ENCODE measurements at regions of chr5 and their contacts with region 1.

Region 1: DNA sequence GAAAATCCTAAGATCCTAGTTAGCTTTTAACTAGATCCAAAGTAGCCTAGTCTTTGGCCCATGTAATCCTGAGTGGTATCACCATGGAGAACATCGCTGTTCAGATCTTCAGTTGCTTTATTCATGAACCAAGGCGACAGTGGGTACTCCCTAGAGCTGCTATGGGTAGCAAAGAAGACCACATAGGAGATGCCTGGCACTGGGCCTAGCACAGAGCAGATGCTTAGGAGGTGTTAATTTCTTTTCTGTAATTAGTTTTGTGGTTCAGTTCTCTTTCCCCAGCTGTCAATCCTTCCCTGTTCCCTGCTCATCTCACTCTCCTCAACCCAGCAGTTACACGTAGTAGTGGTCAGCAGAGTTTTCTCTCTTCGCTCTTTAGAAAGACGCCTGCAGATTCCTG is 9.3 kb downstream of the CAST start:
- DNase-seq: no peak
- H3K4me3 ChIP-seq: no peak overlapping the region
- H3K27ac ChIP-seq: no peak overlapping the region
- H3K4me1 ChIP-seq: no peaks in the 10 kb centered on the region
- H3K27me3 ChIP-seq: no peaks in the 10 kb centered on the region
- CTCF ChIP-seq: no peak
- EP300 ChIP-seq: no peak
- POLR2A ChIP-seq: no peak
- RAD21 ChIP-seq: no peak

Region 2: GRCh38 chr5:96687812-96688453 is 16.5 kb after region 1 on chr5:
- CTCF ChIA-PET with region 1: interaction called, 18 read pairs
- POLR2A ChIA-PET with region 1: no interaction called
- DNase-seq: no peak
- H3K4me3 ChIP-seq: no peak overlapping the region
- H3K27ac ChIP-seq: no peak overlapping the region
- H3K4me1 ChIP-seq: no peaks in the 10 kb centered on the region
- H3K27me3 ChIP-seq: no peaks in the 10 kb centered on the region
- CTCF ChIP-seq: peak in 2 of 3 experiments; percentile 49 to 53; a peak in 2 of 4 replicates
- EP300 ChIP-seq: no peak
- POLR2A ChIP-seq: no peak
- RAD21 ChIP-seq: peak; percentile 71 to 72

Region 3: GRCh38 chr5:96702503-96703383 is 31.3 kb after region 1 on chr5:
- CTCF ChIA-PET with region 1: interaction called, 4 read pairs
- POLR2A ChIA-PET with region 1: interaction called, 11 read pairs
- DNase-seq: peak in 1 of 2 experiments; percentile 82
- H3K4me3 ChIP-seq: peak overlapping the region; percentile 80 to 88 (median 86)
- H3K27ac ChIP-seq: peak overlapping the region; percentile 38; the same call in 1 of the 2 replicates
- H3K4me1 ChIP-seq: peaks cover 0 to 12% (median 4%) of the 10 kb centered on the region in 4 experiments; a peak in 4 of 7 replicates
- H3K27me3 ChIP-seq: peaks cover 0 to 2% (median 0%) of the 10 kb centered on the region in 4 experiments; a peak in 3 of 7 replicates
- CTCF ChIP-seq: no peak
- EP300 ChIP-seq: no peak
- POLR2A ChIP-seq: peak in 1 of 2 experiments; percentile 41; a peak in 1 of 3 replicates
- RAD21 ChIP-seq: no peak

Measured in H1 (cell line).